ENCODE measurements at regions of chr2 and their contacts with region 1.

Region 1: DNA sequence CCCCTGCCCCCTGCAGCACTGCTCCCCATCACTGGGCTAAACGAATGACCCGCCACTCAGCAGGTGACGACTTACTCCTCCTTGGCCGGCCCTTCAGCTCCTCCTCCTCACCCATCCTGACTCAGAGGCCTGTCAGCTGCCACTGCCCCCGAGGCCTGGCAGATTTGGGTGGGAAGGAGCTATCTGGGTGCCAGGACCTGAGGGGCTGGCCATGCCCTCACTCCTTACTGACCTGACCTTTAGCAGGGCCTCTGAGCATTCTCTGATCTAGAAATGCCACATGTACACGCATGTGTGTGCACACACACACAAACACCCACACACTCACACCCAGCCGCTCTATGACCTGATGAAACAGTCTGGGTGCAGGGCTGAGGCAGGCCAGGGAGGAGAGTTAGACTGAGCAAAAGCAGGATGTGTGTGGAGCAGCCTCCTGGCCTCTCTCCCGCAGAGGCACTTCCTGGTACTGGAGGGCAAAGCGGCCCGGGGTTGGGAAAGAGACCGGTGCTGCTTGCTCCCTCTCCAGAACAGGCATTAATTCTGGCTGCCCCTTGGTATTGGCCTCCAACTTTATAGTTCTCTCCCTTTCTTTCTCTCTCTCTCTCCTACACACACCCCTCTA is 68.0 kb downstream of the ZFP36L2 start:
- DNase-seq: peak; percentile 59
- H3K4me3 Mint-ChIP-seq: peak overlapping the region; percentile 74
- H3K27ac Mint-ChIP-seq: peak overlapping the region; percentile 99
- H3K4me1 Mint-ChIP-seq: peaks cover 49% of the 10 kb centered on the region
- H3K27me3 Mint-ChIP-seq: no peaks in the 10 kb centered on the region

Region 2: DNA sequence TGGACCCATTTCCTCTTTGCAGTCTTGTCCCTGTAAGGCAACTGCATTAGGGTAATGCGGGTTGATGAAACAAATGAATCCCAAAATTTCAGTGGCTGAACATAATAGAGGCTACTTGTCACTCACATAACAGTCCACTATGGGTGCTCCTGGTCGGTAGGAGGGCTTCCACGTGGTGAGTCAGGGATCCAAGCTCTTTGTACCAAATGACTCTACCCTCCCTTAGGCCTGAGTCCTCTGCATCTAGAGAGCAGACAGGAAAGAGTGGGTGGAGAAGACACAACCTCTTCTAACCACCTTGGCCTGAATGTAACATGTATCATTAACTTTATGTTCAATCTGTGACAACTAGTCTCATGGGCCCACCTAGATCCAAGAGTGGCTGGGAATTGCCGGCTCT is 279.8 kb before region 1 on chr2:
- intact Hi-C with region 1: loop called (anchors 1 kb)
- DNase-seq: no peak
- H3K4me3 Mint-ChIP-seq: no peak overlapping the region
- H3K27ac Mint-ChIP-seq: no peak overlapping the region
- H3K4me1 Mint-ChIP-seq: peaks cover 26% of the 10 kb centered on the region
- H3K27me3 Mint-ChIP-seq: no peaks in the 10 kb centered on the region

Region 3: DNA sequence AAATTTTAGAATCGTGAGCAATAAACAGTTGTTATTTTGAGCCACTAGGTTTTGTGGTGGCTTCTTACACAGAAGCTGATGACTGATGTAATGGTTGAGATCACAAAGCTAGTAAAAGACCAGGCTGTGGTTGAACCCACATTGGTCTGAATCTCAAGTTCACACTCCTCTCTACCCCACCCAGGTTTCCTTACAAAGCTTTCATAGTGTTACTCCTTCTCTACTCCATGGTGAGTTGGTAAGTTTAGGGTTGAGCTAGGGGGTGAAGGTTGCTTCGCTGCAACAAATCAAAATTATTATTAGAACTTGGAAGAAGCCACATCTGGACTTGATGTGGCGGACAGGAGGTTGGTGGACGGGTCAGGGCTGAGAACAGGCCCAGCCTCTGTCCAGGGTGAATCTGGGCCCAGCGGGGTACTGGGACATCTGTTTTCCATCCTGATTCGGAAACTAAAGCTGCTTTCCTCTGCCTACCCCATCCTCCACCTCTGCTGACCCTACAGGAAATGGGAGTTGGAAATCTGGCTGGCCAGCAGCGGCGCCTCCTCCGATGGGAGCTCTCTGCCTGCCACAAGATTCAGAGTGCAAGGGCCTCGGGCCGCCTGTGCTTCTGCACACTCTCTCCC is 18.3 kb before region 1 on chr2:
- intact Hi-C with region 1: loop called (anchors 1 kb)
- DNase-seq: no peak
- H3K4me3 Mint-ChIP-seq: peak overlapping the region; percentile 74
- H3K27ac Mint-ChIP-seq: peak overlapping the region; percentile 90
- H3K4me1 Mint-ChIP-seq: peaks cover 66% of the 10 kb centered on the region
- H3K27me3 Mint-ChIP-seq: no peaks in the 10 kb centered on the region

Region 4: GRCh38 chr2:43174368-43174916 is 16.1 kb after region 1 on chr2:
- intact Hi-C with region 1: loop called (anchors 1 kb)
- DNase-seq: peak; percentile 76
- H3K4me3 Mint-ChIP-seq: peak overlapping the region; percentile 32
- H3K27ac Mint-ChIP-seq: peak overlapping the region; percentile 89
- H3K4me1 Mint-ChIP-seq: peaks cover 75% of the 10 kb centered on the region
- H3K27me3 Mint-ChIP-seq: no peaks in the 10 kb centered on the region

Region 5: GRCh38 chr2:43184339-43184895 is 26.0 kb after region 1 on chr2:
- intact Hi-C with region 1: loop called (anchors 1 kb)
- DNase-seq: peak; percentile 45
- H3K4me3 Mint-ChIP-seq: peak overlapping the region; percentile 48
- H3K27ac Mint-ChIP-seq: peak overlapping the region; percentile 86
- H3K4me1 Mint-ChIP-seq: peaks cover 40% of the 10 kb centered on the region
- H3K27me3 Mint-ChIP-seq: peaks cover 2% of the 10 kb centered on the region

Region 6: GRCh38 chr2:43194121-43194869 is 35.9 kb after region 1 on chr2:
- intact Hi-C with region 1: loop called (anchors 1 kb)
- DNase-seq: no peak
- H3K4me3 Mint-ChIP-seq: peak overlapping the region; percentile 79
- H3K27ac Mint-ChIP-seq: peak overlapping the region; percentile 92
- H3K4me1 Mint-ChIP-seq: peaks cover 51% of the 10 kb centered on the region
- H3K27me3 Mint-ChIP-seq: no peaks in the 10 kb centered on the region

Region 7: DNA sequence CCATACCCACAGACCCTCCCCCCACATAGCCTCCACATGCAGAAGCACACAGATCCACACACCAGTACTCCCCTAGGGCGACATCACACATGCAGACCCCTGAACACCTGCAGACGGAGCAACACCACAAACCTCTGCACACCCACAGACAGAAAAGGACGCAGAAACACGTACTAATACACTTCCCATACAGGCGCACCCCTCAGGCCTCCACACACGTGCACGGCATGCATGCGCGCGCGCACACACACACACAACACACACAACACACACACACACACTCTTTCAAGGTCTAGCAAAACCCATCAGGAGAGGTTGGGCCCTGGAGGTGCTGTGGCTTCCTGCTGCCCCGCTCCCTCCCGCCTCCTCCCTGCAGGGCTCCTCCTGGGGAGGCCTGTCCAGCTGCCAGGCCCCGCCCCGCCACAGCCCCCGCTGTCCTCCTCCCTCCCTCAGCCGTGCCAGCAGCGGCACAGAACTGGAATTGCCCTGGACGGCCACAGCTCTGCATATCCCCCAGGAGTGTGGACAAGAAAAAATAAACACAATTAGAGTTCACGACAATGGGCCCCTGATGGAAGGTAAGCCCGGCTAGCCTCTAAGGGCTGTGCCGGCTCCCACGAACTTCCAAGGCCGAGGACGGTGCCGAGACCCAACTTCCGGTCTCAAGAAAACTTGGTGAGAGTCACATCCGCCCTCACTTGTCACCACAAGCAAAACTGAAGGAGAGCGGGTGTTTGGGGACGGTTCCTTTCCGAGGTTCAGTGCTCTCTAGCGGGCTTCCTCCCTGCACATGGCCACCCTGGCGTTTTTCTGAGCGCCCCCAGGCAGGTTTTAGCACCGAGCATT is 61.2 kb after region 1 on chr2:
- intact Hi-C with region 1: loop called (anchors 1 kb)
- DNase-seq: peak; percentile 78
- H3K4me3 Mint-ChIP-seq: peak overlapping the region; percentile 94
- H3K27ac Mint-ChIP-seq: peak overlapping the region; percentile 88
- H3K4me1 Mint-ChIP-seq: peaks cover 48% of the 10 kb centered on the region
- H3K27me3 Mint-ChIP-seq: no peaks in the 10 kb centered on the region